GM12878 (cell line): ENCODE measurements at regions of chr3 and their contacts with region 1.

Region 1: GRCh38 chr3:152405915-152406802 is 137.4 kb downstream of the MBNL1 start:
- DNase-seq: no peak
- ATAC-seq: peak; percentile 22; the same call in 2 of the 3 replicates
- H3K4me3 ChIP-seq: no peak overlapping the region
- H3K27ac ChIP-seq: no peak overlapping the region
- H3K4me1 ChIP-seq: no peaks in the 10 kb centered on the region; the same call in 1 of the 2 replicates
- H3K27me3 ChIP-seq: no peaks in the 10 kb centered on the region
- CTCF ChIP-seq: no peak
- EP300 ChIP-seq: no peak
- POLR2A ChIP-seq: no peak
- RAD21 ChIP-seq: no peak

Region 2: GRCh38 chr3:152252755-152253154 is 153.4 kb before region 1 on chr3:
- CTCF ChIA-PET with region 1: no interaction called
- POLR2A ChIA-PET with region 1: no interaction called
- RAD21 ChIA-PET with region 1: no interaction called
- SMC1A ChIA-PET with region 1: no interaction called
- in situ Hi-C with region 1: no loop called
- intact Hi-C with region 1: no loop called
- DNase-seq: no peak
- ATAC-seq: no peak
- H3K4me3 ChIP-seq: no peak overlapping the region
- H3K27ac ChIP-seq: no peak overlapping the region
- H3K4me1 ChIP-seq: peaks cover 29% of the 10 kb centered on the region
- H3K27me3 ChIP-seq: no peaks in the 10 kb centered on the region
- CTCF ChIP-seq: no peak
- EP300 ChIP-seq: no peak
- POLR2A ChIP-seq: no peak
- RAD21 ChIP-seq: no peak

Region 3: DNA sequence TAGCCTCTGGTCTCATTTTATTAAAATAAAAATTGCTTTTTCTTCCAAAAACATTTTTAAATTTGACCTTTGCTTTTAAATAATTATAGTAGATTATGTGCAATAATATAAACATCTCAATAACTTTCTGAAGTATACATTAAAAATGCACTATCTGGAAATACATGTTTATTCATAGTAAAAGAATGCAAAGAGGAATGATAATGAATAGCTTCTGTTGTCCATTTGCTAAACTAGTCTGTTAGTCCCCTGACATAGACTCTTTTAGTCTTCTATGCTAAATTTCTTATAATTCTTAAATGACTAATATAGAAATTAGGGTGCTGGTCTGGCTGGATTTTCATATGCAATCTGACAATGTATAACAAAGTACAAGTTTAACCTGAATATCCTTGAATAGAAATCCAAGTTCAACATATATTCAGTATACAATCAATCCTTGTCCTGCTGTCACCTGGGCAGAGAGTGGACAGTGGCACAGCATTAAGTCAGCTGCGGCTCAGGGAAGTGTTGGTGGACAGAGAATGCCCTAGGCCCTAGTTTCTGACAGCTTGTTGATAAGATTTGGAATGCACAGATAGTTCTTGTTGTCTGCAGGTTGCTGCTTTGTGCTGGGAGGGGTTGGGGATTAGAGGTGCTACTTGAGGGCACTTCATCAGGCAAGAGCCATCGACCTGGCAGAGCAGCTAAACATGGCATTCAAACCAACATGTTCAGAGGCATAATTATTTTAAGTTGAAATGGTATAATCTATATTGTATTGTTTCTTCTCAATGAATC is 24.3 kb after region 1 on chr3:
- CTCF ChIA-PET with region 1: interaction called, 6 read pairs
- POLR2A ChIA-PET with region 1: interaction called, 4 read pairs
- RAD21 ChIA-PET with region 1: no interaction called
- SMC1A ChIA-PET with region 1: interaction called, 10 read pairs
- in situ Hi-C with region 1: no loop called
- intact Hi-C with region 1: no loop called
- DNase-seq: no peak
- ATAC-seq: no peak
- H3K4me3 ChIP-seq: no peak overlapping the region
- H3K27ac ChIP-seq: no peak overlapping the region
- H3K4me1 ChIP-seq: no peaks in the 10 kb centered on the region
- H3K27me3 ChIP-seq: no peaks in the 10 kb centered on the region
- CTCF ChIP-seq: no peak
- EP300 ChIP-seq: no peak
- POLR2A ChIP-seq: no peak
- RAD21 ChIP-seq: no peak

Region 4: DNA sequence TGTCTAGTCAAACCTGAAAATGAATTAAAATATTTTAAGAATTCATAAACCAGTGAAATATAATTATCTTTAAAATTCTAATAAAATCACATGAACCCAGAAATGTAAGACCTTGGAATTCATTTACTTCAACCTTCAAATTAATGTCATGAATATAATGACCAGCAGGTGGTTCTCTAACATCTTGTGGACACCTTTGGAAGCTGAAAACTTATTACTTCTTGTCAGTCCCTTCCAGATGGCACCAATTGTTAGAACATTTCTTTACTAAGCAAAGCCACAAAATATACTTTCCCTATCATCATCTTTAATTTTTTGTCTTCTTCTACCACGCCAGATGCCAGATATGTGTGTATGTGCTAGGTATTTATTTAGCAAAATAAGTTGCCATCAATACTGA is 102.5 kb after region 1 on chr3:
- CTCF ChIA-PET with region 1: no interaction called
- POLR2A ChIA-PET with region 1: no interaction called
- RAD21 ChIA-PET with region 1: no interaction called
- SMC1A ChIA-PET with region 1: no interaction called
- in situ Hi-C with region 1: no loop called
- intact Hi-C with region 1: no loop called
- DNase-seq: no peak
- ATAC-seq: peak; percentile 29; the same call in 2 of the 3 replicates
- H3K4me3 ChIP-seq: no peak overlapping the region
- H3K27ac ChIP-seq: no peak overlapping the region; the same call in 1 of the 2 replicates
- H3K4me1 ChIP-seq: peaks cover 26% of the 10 kb centered on the region
- H3K27me3 ChIP-seq: no peaks in the 10 kb centered on the region
- CTCF ChIP-seq: peak; percentile 31 to 36 (median 35); a peak in 4 of 6 replicates
- EP300 ChIP-seq: no peak
- POLR2A ChIP-seq: no peak
- RAD21 ChIP-seq: peak; percentile 69

Region 5: DNA sequence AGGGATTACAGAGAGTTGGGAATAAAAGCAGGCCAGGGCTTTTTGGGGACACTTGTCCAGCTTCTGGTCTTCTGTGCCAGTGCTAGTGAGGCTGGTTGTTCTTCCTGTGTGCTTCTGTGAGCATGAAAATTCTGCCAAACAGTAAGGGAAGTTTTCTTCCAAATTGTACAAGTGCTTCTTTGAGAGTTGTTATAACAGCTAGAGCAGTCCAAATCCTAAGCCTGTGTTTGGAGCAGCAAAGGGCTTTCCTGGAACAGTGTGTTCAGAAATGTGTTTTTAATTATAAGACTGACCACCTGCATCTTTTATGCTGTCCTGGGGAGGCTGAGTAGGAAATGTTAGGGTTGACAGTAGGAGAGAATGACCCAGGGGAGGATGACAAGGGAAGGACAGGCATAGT is 205.7 kb after region 1 on chr3:
- CTCF ChIA-PET with region 1: no interaction called
- POLR2A ChIA-PET with region 1: no interaction called
- RAD21 ChIA-PET with region 1: no interaction called
- SMC1A ChIA-PET with region 1: no interaction called
- in situ Hi-C with region 1: no loop called
- intact Hi-C with region 1: no loop called
- DNase-seq: no peak
- ATAC-seq: no peak
- H3K4me3 ChIP-seq: no peak overlapping the region
- H3K27ac ChIP-seq: no peak overlapping the region
- H3K4me1 ChIP-seq: no peaks in the 10 kb centered on the region
- H3K27me3 ChIP-seq: no peaks in the 10 kb centered on the region
- CTCF ChIP-seq: no peak
- EP300 ChIP-seq: no peak
- POLR2A ChIP-seq: no peak
- RAD21 ChIP-seq: no peak